PC-9 (cell line): ENCODE measurements at regions of chr1 and their contacts with region 1.

Region 1: DNA sequence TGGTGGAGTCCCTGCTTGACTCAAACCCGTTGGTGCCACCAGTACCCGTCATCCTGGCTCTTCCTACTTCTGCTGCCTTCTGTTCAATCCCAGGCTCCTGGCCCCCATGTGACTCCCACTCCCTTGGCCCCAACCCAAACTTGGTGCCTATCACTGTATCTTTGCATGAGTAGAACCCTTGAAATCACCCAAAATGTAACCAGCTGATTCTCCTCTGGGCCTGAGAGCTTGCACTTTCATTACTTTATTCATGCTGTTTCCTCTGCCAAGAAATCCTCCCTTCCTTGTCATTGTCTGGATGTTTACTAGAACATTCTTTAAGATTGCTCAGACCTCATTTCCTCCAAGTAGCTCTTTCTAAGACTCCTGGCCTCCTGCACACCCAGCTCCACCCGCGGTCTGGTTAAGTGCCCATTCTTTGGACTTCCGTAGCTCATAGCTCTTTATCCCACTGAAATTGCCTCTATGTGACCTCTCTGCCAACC is 15.7 kb downstream of the PTAFR start:
- DNase-seq: no peak
- H3K4me3 ChIP-seq: no peak overlapping the region
- H3K27ac ChIP-seq: no peak overlapping the region
- H3K4me1 ChIP-seq: no peaks in the 10 kb centered on the region
- H3K27me3 ChIP-seq: no peaks in the 10 kb centered on the region
- CTCF ChIP-seq: no peak

Region 2: GRCh38 chr1:28359592-28360239 is 198.9 kb after region 1 on chr1:
- CTCF ChIA-PET with region 1: interaction called, 10 read pairs
- POLR2A ChIA-PET with region 1: no interaction called
- intact Hi-C with region 1: no loop called
- DNase-seq: peak; percentile 35 to 62
- H3K4me3 ChIP-seq: no peak overlapping the region
- H3K27ac ChIP-seq: no peak overlapping the region
- H3K4me1 ChIP-seq: peaks cover 4% of the 10 kb centered on the region; the same call in 1 of the 2 replicates
- H3K27me3 ChIP-seq: no peaks in the 10 kb centered on the region
- CTCF ChIP-seq: peak; percentile 73